ENCODE measurements at regions of chr12 and their contacts with region 1.

Region 1: DNA sequence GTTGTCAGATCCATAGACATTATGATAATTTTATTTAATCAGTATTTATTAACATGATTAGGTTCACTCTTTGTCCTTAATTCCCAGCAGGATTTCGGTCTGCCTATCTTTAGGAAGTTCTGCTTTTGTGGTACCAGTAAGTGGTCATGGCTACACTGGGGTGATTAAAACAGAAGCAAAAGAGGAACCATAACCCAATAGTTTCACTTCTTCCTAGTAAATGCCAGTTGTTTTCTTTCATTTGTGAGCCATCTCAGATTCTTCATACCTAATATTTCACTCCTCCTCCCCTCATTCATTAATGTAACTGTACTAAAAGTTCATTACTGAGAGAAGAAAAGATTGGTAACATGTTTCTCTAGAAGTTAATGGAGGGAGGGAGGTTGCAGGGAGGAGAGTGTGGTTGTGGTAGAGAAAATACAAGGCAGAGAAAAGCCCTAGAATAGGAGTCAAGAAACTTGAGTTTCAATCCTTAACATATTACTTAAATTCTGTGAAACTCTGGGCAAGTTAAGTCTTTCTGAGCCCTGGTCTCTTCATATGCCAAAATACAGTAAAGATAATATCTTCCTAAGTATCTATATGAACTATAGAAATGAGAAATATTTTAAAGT is 101.2 kb downstream of the PEBP1 start:
- DNase-seq: no peak
- H3K4me3 ChIP-seq: no peak overlapping the region
- H3K27ac ChIP-seq: peak overlapping the region; percentile 86
- H3K4me1 ChIP-seq: peaks cover 35% of the 10 kb centered on the region
- H3K27me3 ChIP-seq: no peaks in the 10 kb centered on the region
- CTCF ChIP-seq: no peak

Region 2: GRCh38 chr12:118061876-118062796 is 175.0 kb before region 1 on chr12:
- CTCF ChIA-PET with region 1: no interaction called
- POLR2A ChIA-PET with region 1: no interaction called
- intact Hi-C with region 1: no loop called
- DNase-seq: peak; percentile 48 to 64
- H3K4me3 ChIP-seq: peak overlapping the region; percentile 79
- H3K27ac ChIP-seq: peak overlapping the region; percentile 94
- H3K4me1 ChIP-seq: peaks cover 34% of the 10 kb centered on the region
- H3K27me3 ChIP-seq: no peaks in the 10 kb centered on the region
- CTCF ChIP-seq: no peak

Region 3: GRCh38 chr12:118271790-118272417 is 34.7 kb after region 1 on chr12:
- CTCF ChIA-PET with region 1: no interaction called
- POLR2A ChIA-PET with region 1: no interaction called
- intact Hi-C with region 1: loop called (anchors 1 kb)
- DNase-seq: peak; percentile 59 to 94
- H3K4me3 ChIP-seq: peak overlapping the region; percentile 49
- H3K27ac ChIP-seq: peak overlapping the region; percentile 96
- H3K4me1 ChIP-seq: peaks cover 61% of the 10 kb centered on the region
- H3K27me3 ChIP-seq: no peaks in the 10 kb centered on the region
- CTCF ChIP-seq: no peak

Region 4: DNA sequence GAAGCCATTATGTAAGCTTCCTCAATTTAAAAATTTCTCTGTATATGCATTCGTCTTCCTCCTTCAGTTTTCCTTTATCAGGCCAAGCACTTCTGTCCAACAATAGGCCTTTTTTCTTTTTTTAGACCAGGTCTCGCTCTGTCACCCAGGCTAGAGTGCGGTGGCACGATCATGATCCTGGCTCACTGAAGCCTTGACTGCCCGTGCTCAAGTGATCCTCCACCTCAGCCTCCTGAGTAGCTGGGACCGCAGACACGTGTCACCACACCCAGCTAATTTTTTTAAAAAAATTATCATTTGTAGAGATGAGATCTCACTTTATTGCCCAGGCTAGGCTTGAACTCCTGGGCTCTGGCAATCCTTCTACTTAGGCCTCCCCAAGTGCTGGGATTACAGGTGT is 109.7 kb after region 1 on chr12:
- CTCF ChIA-PET with region 1: no interaction called
- POLR2A ChIA-PET with region 1: interaction called, 19 read pairs
- intact Hi-C with region 1: no loop called
- DNase-seq: no peak
- H3K4me3 ChIP-seq: no peak overlapping the region
- H3K27ac ChIP-seq: no peak overlapping the region
- H3K4me1 ChIP-seq: no peaks in the 10 kb centered on the region
- H3K27me3 ChIP-seq: no peaks in the 10 kb centered on the region
- CTCF ChIP-seq: no peak

Measured in PC-9 (cell line).